Heart right ventricle (tissue), 16 donors: ENCODE measurements at regions of chr9 and their contacts with region 1.

Region 1: DNA sequence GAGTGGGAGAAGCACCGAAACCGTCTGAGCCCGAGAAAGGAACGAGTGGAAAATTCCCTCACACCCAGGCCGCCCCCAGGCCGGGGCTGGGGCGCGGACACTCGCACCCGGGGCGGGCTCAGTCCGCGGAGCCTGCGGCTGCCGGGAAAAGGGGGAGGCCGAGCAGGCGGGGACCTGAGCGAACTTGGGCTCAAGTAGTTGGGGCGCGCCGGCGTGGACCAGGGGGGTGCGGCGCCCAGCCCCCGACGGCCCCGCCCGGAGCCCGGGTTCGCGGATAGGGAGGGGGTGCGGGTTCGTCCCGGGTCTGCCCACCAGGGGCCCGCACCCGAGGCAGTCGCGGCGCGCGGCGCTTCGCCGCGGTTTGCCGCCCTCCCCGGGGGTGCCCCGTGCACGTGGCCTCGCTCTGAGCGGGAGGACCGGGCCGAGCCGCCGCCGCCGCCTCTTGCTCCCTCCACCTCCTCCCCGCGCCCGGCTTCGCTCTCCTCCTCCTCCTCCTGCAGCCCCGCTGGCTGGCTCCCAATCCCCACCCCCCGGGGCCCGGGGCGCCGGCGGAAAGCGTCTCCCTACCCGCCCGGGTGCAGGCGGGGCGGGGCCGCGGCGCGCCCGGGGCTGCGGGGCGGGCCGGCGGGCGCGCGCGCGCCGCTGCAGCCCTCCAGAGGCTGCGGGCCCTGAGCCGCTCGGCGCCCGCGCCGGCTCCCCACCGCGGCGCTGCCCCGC is 1.1 kb upstream of the NFIB start:
- DNase-seq: peak; percentile 94 to 98
- ATAC-seq: peak; percentile 66 to 91 (median 82)
- H3K4me3 ChIP-seq: peak overlapping the region; percentile 55 to 94 (median 76)
- H3K27ac ChIP-seq: peak overlapping the region; percentile 96 to 100 (median 99)
- H3K4me1 ChIP-seq: peaks cover 0 to 55% (median 41%) of the 10 kb centered on the region in 9 donors
- H3K27me3 ChIP-seq: peaks cover 0 to 69% (median 0%) of the 10 kb centered on the region in 7 donors
- CTCF ChIP-seq: no peak

Region 2: DNA sequence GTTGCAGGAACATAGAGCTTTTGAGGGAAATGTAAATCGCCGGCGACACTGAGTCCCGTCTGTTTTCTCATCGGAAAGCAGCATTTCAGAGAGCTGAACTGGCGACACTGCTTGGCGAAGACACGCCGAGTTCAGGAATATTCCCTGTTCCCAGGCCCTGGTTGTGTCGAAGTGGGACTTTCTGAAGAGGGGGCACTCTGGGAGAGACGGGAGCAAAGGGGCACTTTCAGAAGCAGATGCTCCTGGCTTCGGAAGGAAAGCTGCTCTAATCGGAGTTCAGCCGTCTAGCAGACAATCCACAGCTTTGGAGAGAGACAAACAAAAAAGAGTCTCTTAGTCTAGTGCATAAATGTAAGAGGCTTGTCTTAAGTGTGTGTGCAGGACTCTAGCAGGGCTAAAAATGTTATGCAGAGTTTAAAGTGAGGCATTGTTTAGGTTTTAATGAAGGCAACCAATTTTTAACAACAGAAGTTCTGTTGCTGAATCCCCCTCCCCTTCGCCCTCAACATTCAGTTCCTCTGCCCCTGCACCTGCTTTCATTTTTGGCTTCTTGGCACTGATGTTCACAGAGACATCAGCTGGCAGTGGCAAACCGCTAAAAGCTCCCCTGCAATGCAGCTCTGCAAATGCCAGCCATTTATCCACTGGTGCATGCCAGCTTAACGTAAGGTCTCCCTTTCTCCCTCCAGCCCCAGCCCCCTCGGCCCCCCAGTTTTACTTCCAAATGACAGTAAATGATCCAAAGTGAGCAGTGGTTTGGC is 746.1 kb before region 1 on chr9:
- intact Hi-C with region 1: loop called in 1 of 10 experiments (anchors 10 kb)
- DNase-seq: peak; percentile 13 to 19
- ATAC-seq: peak; percentile 23 to 63 (median 49)
- H3K4me3 ChIP-seq: peak overlapping the region in 8 of 10 donors; percentile 1 to 47 (median 34)
- H3K27ac ChIP-seq: peak overlapping the region; percentile 59 to 94 (median 84)
- H3K4me1 ChIP-seq: peaks cover 6 to 48% (median 39%) of the 10 kb centered on the region in 9 donors
- H3K27me3 ChIP-seq: no peaks in the 10 kb centered on the region
- CTCF ChIP-seq: no peak

Region 3: DNA sequence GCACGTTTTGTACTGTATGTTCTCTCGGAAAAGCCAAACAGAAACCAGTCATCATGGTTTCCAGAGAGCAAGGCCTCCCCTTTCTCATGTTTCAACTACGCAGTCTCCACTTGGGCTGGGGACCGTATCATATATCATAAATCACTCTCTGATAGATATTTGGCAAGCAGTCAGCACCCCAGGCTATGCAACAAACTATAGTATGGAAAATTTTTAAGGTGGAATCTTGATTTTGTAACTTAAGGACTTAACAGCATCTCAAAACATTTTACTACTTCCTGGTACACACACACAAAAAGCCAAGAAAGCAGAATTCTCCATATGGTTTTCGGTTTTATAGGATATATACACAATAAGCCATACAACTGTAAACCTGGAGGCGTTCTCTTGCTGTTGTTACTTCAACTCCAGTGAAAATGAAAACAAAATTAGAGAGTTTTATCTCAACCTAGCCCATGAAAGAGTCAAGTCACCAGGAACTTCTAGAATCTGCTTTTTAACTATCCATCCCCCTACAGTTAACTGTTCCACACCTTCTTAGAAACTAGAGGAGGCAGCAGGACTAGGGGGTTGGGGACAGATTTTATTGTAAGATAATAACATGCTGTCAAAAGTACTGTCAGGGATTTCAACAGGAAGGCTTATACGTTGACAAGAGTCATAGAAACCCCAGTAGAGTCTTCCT is 284.6 kb before region 1 on chr9:
- intact Hi-C with region 1: loop called in 5 of 10 experiments (anchors 2 to 5 kb)
- DNase-seq: no peak
- ATAC-seq: peak in 6 of 8 donors; percentile 1 to 69 (median 36)
- H3K4me3 ChIP-seq: peak overlapping the region in 9 of 10 donors; percentile 16 to 44 (median 36)
- H3K27ac ChIP-seq: peak overlapping the region; percentile 68 to 94 (median 86)
- H3K4me1 ChIP-seq: peaks cover 15 to 65% (median 41%) of the 10 kb centered on the region in 9 donors
- H3K27me3 ChIP-seq: no peaks in the 10 kb centered on the region
- CTCF ChIP-seq: no peak

Region 4: GRCh38 chr9:14107977-14108376 is 207.1 kb before region 1 on chr9:
- intact Hi-C with region 1: loop called in 2 of 10 experiments (anchors 10 kb)
- DNase-seq: no peak
- ATAC-seq: peak in 7 of 8 donors; percentile 55 to 95 (median 93)
- H3K4me3 ChIP-seq: no peak overlapping the region
- H3K27ac ChIP-seq: peak overlapping the region in 9 of 10 donors; percentile 18 to 71 (median 48)
- H3K4me1 ChIP-seq: peaks cover 0 to 56% (median 20%) of the 10 kb centered on the region in 9 donors
- H3K27me3 ChIP-seq: no peaks in the 10 kb centered on the region
- CTCF ChIP-seq: no peak

Region 5: GRCh38 chr9:14156046-14156445 is 159.0 kb before region 1 on chr9:
- intact Hi-C with region 1: loop called in 1 of 10 experiments (anchors 10 kb)
- DNase-seq: no peak
- ATAC-seq: no peak
- H3K4me3 ChIP-seq: no peak overlapping the region
- H3K27ac ChIP-seq: peak overlapping the region in 6 of 10 donors; percentile 2 to 41 (median 8)
- H3K4me1 ChIP-seq: peaks cover 3 to 100% (median 68%) of the 10 kb centered on the region in 9 donors
- H3K27me3 ChIP-seq: no peaks in the 10 kb centered on the region
- CTCF ChIP-seq: no peak

Region 6: DNA sequence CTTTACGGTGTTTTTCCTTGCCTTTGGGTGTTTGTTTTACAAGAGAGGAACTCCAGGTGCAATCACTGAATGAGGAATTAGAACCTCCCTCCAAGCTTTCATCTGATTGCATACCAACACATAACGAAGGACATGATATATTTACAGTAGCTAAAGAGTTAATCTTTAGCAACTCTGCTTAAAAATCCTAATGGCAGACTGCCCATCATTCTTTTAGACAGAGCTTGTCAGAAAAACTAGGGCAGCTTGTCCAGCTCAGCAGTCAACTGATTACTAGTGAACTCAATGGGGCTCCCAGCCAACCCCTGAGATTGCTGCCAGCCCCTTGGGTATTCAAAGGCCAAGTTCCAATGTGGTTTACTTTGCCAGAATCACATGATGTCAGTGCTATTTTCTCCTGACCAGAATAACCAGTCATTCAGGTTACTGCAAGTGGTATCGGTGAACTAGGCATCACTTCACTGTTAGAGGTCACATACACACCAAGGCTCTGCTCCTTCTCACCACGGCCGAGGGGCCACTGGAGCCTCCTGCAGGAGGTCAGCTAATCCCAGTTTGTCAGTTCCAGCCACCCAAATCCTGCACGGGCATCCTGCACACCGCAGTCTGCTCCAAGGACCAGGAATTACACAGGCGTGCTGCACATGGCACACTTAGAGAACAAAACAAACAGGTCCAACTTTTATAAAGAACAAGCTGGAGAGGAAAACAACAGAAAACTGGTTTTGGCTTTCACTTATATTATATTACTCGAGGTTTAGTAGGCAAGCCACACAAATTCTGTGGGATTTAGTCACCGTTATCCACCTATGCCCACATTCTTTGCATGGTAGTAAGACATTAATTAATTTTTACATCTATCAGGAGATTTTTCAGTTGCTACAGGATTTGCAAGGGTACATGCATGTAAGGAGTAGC is 63.7 kb before region 1 on chr9:
- intact Hi-C with region 1: loop called in 1 of 10 experiments (anchors 5 kb)
- DNase-seq: peak; percentile 82 to 87
- ATAC-seq: peak; percentile 88 to 98 (median 94)
- H3K4me3 ChIP-seq: peak overlapping the region in 5 of 10 donors; percentile 7 to 23 (median 12)
- H3K27ac ChIP-seq: peak overlapping the region in 9 of 10 donors; percentile 49 to 82 (median 71)
- H3K4me1 ChIP-seq: peaks cover 20 to 87% (median 63%) of the 10 kb centered on the region in 9 donors
- H3K27me3 ChIP-seq: no peaks in the 10 kb centered on the region
- CTCF ChIP-seq: no peak

Region 7: GRCh38 chr9:14277244-14277643 is 37.8 kb before region 1 on chr9:
- intact Hi-C with region 1: loop called in 3 of 10 experiments (anchors 5 kb)
- DNase-seq: no peak
- ATAC-seq: peak; percentile 17 to 54 (median 38)
- H3K4me3 ChIP-seq: peak overlapping the region in 2 of 10 donors; percentile 5 to 12
- H3K27ac ChIP-seq: peak overlapping the region in 9 of 10 donors; percentile 5 to 84 (median 55)
- H3K4me1 ChIP-seq: peaks cover 10 to 99% (median 90%) of the 10 kb centered on the region in 9 donors
- H3K27me3 ChIP-seq: no peaks in the 10 kb centered on the region
- CTCF ChIP-seq: no peak